OCI-LY7 (cell line): ENCODE measurements at regions of chr1 and their contacts with region 1.

Region 1: GRCh38 chr1:206583707-206584648 is 28.3 kb downstream of the EIF2D start:
- DNase-seq: peak; percentile 78
- H3K4me3 ChIP-seq: no peak overlapping the region
- H3K27ac ChIP-seq: no peak overlapping the region
- H3K4me1 ChIP-seq: peaks cover 14% of the 10 kb centered on the region
- CTCF ChIP-seq: peak; percentile 99

Region 2: GRCh38 chr1:206479183-206480125 is 104.5 kb before region 1 on chr1:
- CTCF ChIA-PET with region 1: no interaction called
- POLR2A ChIA-PET with region 1: no interaction called
- intact Hi-C with region 1: loop called (anchors 1 kb)
- DNase-seq: peak; percentile 77
- H3K4me3 ChIP-seq: no peak overlapping the region
- H3K27ac ChIP-seq: no peak overlapping the region
- H3K4me1 ChIP-seq: no peaks in the 10 kb centered on the region
- CTCF ChIP-seq: peak; percentile 89

Region 3: DNA sequence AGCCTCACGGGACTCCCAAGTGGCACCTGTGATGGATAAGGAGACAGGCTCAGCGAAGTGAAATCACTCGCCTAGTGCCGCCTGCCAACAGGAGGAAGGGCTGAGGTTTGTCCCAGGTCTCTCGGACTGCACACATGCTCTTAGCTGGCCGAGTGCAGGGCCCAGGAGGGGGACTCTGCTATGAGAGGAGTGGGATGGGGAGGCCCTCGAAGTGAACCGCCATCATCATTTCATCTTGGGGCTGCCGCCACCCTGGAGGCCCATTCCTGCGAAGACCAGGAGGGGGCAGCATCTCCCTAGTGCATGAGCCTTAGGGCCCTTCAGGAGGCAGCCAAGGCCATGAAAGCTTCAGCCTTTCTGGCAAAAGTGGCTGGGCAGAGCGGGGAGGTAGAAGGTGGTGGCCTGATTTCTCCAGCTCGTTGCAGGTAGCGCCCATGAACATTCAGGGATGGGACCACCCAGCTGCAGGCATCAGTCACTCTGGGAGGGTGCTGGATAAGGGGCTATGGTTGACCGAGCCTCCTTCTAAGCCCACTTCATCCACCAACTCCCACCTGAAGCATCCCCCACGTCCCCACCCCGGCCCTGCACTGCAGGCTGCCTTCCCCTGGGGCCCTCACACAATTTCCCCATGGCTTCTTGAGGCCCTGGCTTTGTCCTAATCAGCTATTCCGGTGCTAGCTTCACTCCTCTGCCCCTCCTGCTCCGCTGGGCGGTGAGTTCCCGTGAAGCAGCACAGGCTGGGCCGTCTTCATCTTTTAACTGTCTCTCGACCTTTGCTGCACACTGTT is 93.8 kb before region 1 on chr1:
- CTCF ChIA-PET with region 1: interaction called, 4 read pairs
- POLR2A ChIA-PET with region 1: interaction called, 4 read pairs
- intact Hi-C with region 1: loop called (anchors 1 kb)
- DNase-seq: peak; percentile 75
- H3K4me3 ChIP-seq: no peak overlapping the region
- H3K27ac ChIP-seq: no peak overlapping the region
- H3K4me1 ChIP-seq: peaks cover 5% of the 10 kb centered on the region
- CTCF ChIP-seq: peak; percentile 93

Region 4: DNA sequence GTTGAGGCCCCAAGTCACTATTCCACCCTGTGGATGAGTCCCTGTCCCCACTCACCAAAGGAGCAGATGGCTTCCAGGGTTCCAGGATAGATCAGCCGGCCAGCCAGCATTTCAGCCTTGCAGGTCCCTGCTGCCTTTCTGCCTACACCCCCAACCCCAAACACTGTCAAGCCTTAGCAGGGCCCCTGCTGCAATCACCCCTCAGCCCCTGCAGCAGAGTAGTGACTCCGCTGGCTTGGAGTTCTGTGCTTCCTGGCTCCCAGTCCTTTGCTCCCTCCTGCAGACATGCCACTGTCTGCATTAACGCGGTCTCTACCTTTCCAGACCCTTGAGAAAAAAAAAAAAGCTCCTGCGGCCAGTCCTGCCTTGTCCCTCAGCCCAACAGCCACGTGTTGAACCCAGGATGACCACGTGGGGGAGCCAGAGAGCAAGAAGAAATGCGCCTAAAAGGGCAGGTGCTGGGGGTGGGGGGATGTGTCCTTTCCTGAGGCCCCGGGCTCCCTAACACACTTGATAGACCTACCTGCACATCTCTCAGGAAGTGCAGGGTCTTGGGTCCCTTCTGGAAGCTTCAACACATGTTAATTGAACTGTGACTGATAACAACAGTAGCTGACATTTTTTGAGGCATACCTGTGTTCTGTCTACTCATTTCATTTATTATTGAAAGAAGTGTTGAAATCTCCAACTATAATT is 39.3 kb before region 1 on chr1:
- CTCF ChIA-PET with region 1: interaction called, 29 read pairs
- POLR2A ChIA-PET with region 1: interaction called, 8 read pairs
- intact Hi-C with region 1: loop called (anchors 1 kb)
- DNase-seq: peak; percentile 76
- H3K4me3 ChIP-seq: no peak overlapping the region
- H3K27ac ChIP-seq: no peak overlapping the region
- H3K4me1 ChIP-seq: peaks cover 12% of the 10 kb centered on the region
- CTCF ChIP-seq: peak; percentile 95

Region 5: GRCh38 chr1:206556750-206557635 is 27.0 kb before region 1 on chr1:
- CTCF ChIA-PET with region 1: interaction called, 4 read pairs
- POLR2A ChIA-PET with region 1: interaction called, 15 read pairs
- intact Hi-C with region 1: loop called (anchors 2 kb)
- DNase-seq: peak; percentile 88
- H3K4me3 ChIP-seq: peak overlapping the region; percentile 92
- H3K27ac ChIP-seq: peak overlapping the region; percentile 72
- H3K4me1 ChIP-seq: peaks cover 57% of the 10 kb centered on the region
- CTCF ChIP-seq: peak; percentile 34; the same call in 1 of the 2 replicates

Region 6: GRCh38 chr1:206563367-206564207 is 20.4 kb before region 1 on chr1:
- CTCF ChIA-PET with region 1: no interaction called
- POLR2A ChIA-PET with region 1: interaction called, 7 read pairs
- intact Hi-C with region 1: loop called (anchors 2 kb)
- DNase-seq: no peak
- H3K4me3 ChIP-seq: peak overlapping the region; percentile 52
- H3K27ac ChIP-seq: peak overlapping the region; percentile 55
- H3K4me1 ChIP-seq: peaks cover 42% of the 10 kb centered on the region
- CTCF ChIP-seq: no peak